Sigmoid colon (tissue), 7 donors: ENCODE measurements at regions of chr10 and their contacts with region 1.

Region 1: GRCh38 chr10:64733980-64734379 is 1212.8 kb downstream of the REEP3 start:
- DNase-seq: no peak
- H3K4me3 ChIP-seq: no peak overlapping the region
- H3K27ac ChIP-seq: no peak overlapping the region
- H3K4me1 ChIP-seq: no peaks in the 10 kb centered on the region
- H3K27me3 ChIP-seq: no peaks in the 10 kb centered on the region
- CTCF ChIP-seq: peak in 1 of 4 experiments; percentile 21
- EP300 ChIP-seq: no peak
- POLR2A ChIP-seq: no peak

Region 2: DNA sequence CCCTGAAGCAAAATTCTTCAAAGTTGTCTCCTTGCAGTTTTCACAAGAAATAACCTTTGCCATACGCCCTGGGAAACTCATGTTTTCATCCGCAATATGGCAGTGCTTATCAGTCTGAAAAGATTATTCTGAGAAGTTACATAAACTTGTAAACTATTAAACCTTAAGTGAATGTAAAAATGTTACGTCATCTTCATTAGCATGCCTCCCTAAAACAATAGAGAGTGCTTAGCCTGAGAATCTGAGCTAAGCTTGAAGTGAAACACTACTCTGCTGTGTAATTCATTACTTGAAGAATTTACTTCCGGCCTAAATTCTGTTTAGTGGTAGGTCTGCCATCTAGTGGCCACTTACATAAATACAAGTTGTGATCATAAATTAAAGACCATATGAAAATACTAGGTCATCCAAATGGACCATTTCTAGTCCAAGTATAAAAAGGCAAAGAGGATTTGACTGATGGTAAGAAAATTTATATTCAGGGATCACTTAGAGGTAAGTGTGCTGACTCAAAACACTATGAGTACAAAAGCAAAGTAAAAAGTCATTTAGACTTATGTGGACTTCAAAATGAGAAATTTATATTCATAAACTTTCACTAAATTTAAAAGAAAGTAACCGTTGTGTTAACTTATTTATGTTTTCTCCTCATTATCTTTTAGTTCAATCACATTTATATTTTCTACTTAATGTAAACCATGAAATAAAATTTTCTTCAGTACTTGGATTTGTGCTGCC is 1446.8 kb after region 1 on chr10:
- intact Hi-C with region 1: loop called (anchors 5 kb)
- DNase-seq: no peak
- H3K4me3 ChIP-seq: no peak overlapping the region
- H3K27ac ChIP-seq: no peak overlapping the region
- H3K4me1 ChIP-seq: no peaks in the 10 kb centered on the region
- H3K27me3 ChIP-seq: no peaks in the 10 kb centered on the region
- CTCF ChIP-seq: peak; percentile 12 to 64 (median 41)
- EP300 ChIP-seq: no peak
- POLR2A ChIP-seq: no peak